ENCODE measurements at regions of chr2 and their contacts with region 1.

Region 1: DNA sequence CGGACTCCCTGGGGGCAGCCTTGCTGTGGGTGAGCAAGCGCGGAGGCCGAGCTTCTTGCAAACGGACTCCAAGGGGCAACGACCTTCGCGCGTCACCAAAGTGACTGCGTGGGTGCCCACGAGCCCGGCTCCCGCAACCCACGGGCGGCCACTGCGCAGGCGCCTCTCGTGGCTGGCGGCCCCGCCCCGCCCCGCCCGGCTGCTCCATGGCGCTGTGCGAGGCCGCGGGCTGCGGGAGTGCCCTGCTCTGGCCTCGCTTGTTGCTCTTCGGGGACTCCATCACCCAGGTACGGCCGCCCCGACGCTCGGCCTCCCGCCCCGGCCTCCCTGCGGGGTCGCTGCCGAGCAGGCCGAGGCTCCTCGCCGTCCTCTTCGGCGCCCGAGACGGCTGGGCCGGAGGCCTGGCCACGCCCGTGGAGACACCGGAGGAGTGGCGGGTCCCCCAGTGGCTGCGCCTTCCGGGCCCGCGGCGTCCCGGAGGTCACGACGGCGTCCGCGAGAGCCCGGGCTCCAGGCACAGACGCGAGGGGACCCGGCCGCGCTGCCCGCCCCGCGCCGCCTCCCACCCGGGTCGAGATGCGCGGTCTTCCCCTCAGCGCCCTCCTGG is at the start of gene IAH1:
- DNase-seq: peak; percentile 62 to 87 (median 76)
- ATAC-seq: peak; percentile 81 to 84
- H3K4me3 Mint-ChIP-seq: peak within 1 kb of the TSS; percentile 76 to 89 (median 84)
- H3K27ac Mint-ChIP-seq: peak within 1 kb of the TSS; percentile 61 to 97 (median 92)
- H3K4me1 Mint-ChIP-seq: peaks cover 17 to 55% (median 43%) of the 10 kb centered on the region in 4 donors
- H3K27me3 Mint-ChIP-seq: no peaks in the 10 kb centered on the region
- polyA plus RNA-seq, gene IAH1: 61.8 to 81.5 (median 66.6) TPM

Region 2: DNA sequence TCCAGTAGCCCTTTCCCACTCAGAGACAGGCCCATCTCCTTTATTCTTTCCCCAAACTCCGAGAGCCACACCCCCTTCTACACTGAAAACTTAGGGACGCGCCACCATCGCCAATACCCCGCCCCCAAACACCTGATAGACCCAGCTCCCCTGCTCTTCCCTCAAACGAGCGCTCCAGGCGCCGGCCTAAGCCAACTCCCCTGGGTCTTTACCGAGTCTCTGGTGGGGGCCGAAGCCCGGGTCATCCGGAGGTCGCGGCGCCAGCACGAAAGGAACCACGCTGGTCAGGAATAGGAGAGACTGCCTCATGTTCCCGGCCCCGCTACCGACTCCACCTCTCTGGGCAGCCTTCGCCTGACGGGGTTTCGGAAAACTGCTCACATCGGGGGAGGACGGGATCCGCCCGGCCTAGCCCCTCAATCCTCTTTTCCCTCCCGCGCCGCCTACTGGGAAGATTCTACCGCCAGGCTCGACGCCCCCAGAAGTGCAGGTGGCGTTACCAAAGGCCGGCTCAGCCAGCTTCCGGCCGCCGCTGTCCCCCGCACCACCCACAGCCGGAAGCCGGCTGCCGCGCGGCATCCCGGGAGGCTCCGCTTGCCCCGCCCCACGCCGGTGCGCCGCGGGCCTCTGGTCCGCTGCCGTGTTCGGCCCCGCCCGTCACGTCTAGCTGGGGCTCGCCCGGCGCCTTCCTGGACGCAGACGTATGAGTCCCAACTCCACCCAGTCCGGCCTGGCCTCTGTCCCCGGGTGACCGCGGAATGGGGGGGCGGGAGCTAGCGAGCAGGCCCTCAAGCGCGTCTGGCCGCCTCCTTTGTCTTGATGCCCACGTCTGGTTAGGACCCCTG is 81.1 kb after region 1 on chr2 and contains the start of gene ADAM17:
- POLR2A ChIA-PET with region 1: interaction called, 39 read pairs
- DNase-seq: peak; percentile 68 to 86 (median 80)
- ATAC-seq: peak; percentile 89 to 93
- H3K4me3 Mint-ChIP-seq: peak within 1 kb of the TSS; percentile 94 to 99 (median 96)
- H3K27ac Mint-ChIP-seq: peak within 1 kb of the TSS; percentile 93 to 98 (median 96)
- H3K4me1 Mint-ChIP-seq: peaks cover 26 to 63% (median 56%) of the 10 kb centered on the region in 4 donors
- H3K27me3 Mint-ChIP-seq: no peaks in the 10 kb centered on the region
- polyA plus RNA-seq, gene ADAM17: 6.9 to 7.8 (median 7.7) TPM

Measured in naive thymus-derived CD8-positive, alpha-beta T cell (primary cell).